OCI-LY7 (cell line): ENCODE measurements at regions of chrX and their contacts with region 1.

Region 1: DNA sequence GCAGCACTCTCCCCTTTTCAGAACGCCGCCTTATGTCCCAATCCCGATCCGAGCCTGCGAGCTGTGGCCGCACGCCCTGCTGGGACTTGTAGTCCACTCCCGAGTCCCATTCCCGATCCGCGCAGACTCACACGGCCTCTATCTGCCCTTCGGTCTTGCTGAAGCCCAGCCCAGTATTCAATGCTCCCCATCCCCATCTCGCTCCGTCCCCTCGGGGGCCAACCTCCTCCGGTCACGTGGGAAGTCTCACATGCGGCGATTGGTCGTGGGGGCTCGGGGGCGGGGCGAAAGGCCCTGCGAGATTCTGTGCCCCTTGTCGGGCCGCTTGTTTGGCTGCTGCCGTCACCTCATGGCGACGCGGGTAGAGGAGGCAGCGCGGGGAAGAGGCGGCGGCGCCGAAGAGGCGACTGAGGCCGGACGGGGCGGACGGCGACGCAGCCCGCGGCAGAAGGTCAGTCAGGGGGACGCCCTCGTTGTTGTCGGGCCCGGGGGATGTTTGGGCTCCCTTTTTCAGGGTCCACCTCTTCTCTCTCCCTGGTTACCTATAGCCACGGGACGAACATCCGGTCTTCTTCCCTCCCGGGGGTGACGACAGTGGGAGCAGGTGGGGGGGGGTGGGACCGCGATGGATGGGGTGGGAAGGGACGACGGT is at the start of gene TXLNG:
- DNase-seq: peak; percentile 96
- H3K4me3 ChIP-seq: peak within 1 kb of the TSS; percentile 85
- H3K27ac ChIP-seq: peak within 1 kb of the TSS; percentile 46
- H3K4me1 ChIP-seq: peaks cover 28% of the 10 kb centered on the region
- CTCF ChIP-seq: no peak
- total RNA-seq, gene TXLNG: 16.2 and 16.9 TPM in 2 replicates

Region 2: DNA sequence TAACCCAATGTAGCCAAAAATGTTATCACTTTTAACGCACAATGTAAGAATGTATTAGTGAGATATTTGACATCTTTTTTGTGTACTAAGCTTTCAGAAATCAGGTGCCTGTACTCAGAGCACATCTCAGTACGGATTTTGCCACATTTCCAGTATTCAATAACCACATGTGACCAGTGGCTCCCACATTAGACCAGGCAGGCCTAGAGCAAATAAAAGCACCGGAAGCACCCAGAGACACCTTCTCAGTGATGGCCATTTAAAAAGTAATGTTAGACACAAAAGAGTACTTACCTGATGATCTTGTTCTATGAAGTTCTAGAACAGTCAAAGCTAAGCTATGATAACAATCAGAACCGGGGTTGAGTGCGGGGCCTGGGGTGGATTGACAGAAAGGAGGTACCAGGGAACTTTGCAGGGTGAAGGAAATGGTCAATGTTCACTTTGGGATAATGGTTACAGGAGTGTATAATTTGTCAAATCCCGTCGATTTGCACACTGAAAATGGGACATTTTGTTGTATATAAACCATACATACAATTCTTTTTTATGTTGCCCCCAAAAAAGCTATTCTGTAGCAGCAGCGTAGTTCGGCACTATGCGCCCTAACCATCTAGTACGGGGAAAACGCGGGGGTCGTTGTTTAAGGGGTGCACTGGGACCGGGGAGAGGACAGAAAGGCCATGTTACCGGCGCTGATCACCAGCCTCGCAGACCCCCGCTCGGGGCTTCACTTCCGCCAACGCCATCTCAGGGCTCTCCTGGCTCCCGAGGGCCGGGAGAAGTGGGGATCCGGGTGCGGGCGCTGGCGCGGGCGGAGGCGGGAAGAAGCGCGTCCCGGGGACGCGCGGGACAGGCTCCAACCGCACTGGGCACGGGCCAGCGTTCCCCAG is 74.8 kb before region 1 on chrX:
- CTCF ChIA-PET with region 1: no interaction called
- POLR2A ChIA-PET with region 1: interaction called, 3 read pairs
- intact Hi-C with region 1: loop called (anchors 2 kb)
- DNase-seq: peak; percentile 43
- H3K4me3 ChIP-seq: peak overlapping the region; percentile 84
- H3K27ac ChIP-seq: peak overlapping the region; percentile 73
- H3K4me1 ChIP-seq: peaks cover 30% of the 10 kb centered on the region
- CTCF ChIP-seq: no peak

Region 3: GRCh38 chrX:16719334-16720084 is 66.8 kb before region 1 on chrX and contains the start of gene SYAP1:
- CTCF ChIA-PET with region 1: no interaction called
- POLR2A ChIA-PET with region 1: interaction called, 3 read pairs
- intact Hi-C with region 1: loop called (anchors 2 kb)
- DNase-seq: peak; percentile 91
- H3K4me3 ChIP-seq: peak within 1 kb of the TSS; percentile 99
- H3K27ac ChIP-seq: peak within 1 kb of the TSS; percentile 50
- H3K4me1 ChIP-seq: peaks cover 7% of the 10 kb centered on the region
- CTCF ChIP-seq: no peak
- total RNA-seq, gene SYAP1: 16.0 and 19.7 TPM in 2 replicates

Region 4: DNA sequence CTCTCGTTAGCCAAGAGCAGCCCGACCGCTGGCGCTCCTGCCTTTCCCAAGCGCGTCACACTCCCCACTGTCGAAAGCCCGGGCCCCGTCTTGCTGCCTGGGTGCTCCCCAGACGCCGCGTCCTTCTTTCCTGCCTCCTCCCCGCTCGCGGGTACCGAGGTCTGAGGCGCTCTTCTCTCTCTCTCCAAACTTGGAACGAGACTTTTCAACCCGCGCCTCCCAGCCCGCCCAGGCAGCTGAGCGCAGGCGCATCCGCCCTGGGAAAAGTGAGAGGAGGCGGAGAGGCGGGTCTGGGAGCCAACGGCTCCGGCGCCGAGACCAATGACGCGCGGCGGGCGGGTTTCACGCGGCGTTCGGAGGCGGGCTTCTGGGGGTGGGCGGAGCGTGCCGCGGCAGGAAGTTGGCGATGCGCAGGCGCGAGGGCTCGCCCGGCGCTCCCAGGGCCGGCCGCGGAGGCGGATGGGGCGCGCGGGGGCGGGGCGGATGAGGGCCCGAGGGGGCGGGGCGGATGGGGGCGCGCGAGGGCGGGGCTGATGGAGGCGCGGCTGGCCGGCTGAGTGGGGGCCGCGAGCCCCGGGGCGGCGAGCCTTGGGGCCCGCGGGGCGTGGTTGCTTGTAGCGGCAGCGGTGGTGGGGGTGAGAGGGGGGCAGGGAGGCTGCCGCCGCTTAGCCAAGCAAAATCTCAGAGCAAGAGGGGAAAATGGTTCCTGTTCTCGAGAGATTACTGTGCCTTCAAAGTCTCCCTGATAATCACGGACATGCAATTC is 84.0 kb after region 1 on chrX and contains the start of gene RBBP7:
- CTCF ChIA-PET with region 1: no interaction called
- POLR2A ChIA-PET with region 1: no interaction called
- intact Hi-C with region 1: loop called (anchors 5 kb)
- DNase-seq: peak; percentile 89
- H3K4me3 ChIP-seq: peak within 1 kb of the TSS; percentile 80
- H3K27ac ChIP-seq: peak within 1 kb of the TSS; percentile 97
- H3K4me1 ChIP-seq: peaks cover 61% of the 10 kb centered on the region
- CTCF ChIP-seq: no peak
- total RNA-seq, gene RBBP7: 144 and 161 TPM in 2 replicates